ENCODE measurements at regions of chr11 and their contacts with region 1.

Region 1: DNA sequence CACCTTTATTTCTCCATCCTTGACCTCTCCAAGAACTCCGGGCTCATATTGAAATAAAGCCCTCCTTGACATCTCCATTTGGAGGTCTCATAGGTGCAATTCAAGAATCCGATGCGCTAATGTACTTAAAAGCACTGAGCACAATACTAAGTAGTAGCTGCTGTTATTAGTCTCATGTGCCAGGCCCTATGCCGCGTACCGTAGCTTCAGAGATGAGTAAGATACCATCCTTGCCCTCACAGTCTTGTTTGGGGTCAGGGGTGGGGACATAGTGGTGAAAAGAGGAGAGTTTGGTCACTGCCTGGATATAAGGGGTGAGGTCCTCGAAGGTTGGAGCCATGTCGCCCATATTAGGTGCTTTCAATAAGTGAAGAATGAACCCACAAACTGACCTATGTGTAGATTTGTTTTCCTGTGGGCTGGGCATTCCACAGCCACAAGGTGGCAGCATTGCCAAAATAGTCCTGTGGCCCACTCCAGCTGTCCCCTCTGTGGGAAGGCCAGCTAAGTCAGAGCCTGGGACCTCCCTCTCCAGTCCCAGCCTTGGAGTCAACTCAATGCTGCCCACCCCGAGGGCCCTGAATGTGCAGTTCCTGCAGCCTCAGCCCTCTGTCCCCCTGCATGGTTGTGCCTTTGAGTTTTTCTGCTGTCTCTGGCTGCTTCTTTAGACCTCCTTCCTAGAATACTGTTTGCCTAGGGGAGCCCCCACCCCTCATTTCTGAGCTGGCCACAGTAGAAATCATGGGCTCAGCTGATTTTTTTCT is 6.5 kb downstream of the DCPS start:
- DNase-seq: peak; percentile 81 to 86
- H3K4me3 ChIP-seq: no peak overlapping the region
- H3K4me3 Mint-ChIP-seq: no peak overlapping the region
- H3K27ac Mint-ChIP-seq: no peak overlapping the region
- H3K4me1 ChIP-seq: 0 out of 2 replicates have a peak, but pooled peaks cover under 1% of the 10 kb centered on the region
- H3K4me1 Mint-ChIP-seq: no peaks in the 10 kb centered on the region
- H3K27me3 ChIP-seq: no peaks in the 10 kb centered on the region
- H3K27me3 Mint-ChIP-seq: no peaks in the 10 kb centered on the region
- CTCF ChIP-seq: peak; percentile 89 to 99

Region 2: DNA sequence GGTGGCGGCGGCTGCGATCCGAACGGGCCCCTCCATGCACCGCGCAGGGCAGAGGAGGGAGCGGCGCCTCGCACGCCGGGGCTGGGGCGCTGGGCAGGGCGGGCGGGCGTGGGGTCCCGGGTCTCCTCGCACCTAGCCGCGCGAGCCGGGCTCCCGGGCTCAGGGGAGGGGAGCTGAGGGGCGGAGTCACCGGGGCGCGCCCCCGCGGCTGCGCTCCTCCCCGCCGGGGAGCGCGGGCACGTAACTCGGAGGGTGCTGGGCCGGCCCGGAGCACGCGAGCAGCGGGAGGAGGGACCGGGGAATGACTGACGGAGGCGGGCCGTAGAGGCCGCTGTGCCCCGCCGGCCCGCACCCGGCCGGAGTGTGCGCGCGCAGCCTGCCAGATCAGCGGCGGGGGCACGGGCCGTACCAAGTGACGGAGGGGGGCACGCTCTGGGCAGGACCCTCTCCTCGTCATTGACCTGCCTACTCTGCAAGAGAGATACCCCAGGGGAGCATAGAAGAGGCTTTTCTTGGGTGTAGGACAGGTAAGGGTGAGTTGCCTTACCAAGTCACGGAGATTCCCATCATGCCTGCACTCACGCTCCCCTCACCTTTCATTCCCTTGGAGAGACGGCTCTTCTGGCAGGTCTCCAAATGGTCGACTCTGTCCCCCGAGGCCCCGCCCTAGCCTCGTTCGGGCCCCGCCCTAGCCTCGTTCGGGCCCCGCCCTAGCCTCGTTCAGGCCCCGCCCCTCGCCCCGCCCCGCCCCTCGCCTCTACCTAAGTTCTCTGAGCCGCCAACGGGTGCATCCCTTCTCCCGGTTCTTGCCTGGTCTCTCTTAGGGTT is 247.5 kb before region 1 on chr11 and contains the start of gene CDON:
- CTCF ChIA-PET with region 1: no interaction called
- POLR2A ChIA-PET with region 1: no interaction called
- intact Hi-C with region 1: no loop called
- DNase-seq: peak; percentile 95 to 98
- H3K4me3 ChIP-seq: peak within 1 kb of the TSS; percentile 89
- H3K4me3 Mint-ChIP-seq: peak within 1 kb of the TSS; percentile 95
- H3K27ac Mint-ChIP-seq: peak within 1 kb of the TSS; percentile 100
- H3K4me1 ChIP-seq: peaks cover 8% of the 10 kb centered on the region
- H3K4me1 Mint-ChIP-seq: peaks cover 8% of the 10 kb centered on the region
- H3K27me3 ChIP-seq: no peaks in the 10 kb centered on the region
- H3K27me3 Mint-ChIP-seq: peaks cover 16% of the 10 kb centered on the region
- CTCF ChIP-seq: peak in 1 of 2 experiments; percentile 6
- total RNA-seq, gene CDON: 5.7 and 6.8 TPM in 2 replicates

Region 3: DNA sequence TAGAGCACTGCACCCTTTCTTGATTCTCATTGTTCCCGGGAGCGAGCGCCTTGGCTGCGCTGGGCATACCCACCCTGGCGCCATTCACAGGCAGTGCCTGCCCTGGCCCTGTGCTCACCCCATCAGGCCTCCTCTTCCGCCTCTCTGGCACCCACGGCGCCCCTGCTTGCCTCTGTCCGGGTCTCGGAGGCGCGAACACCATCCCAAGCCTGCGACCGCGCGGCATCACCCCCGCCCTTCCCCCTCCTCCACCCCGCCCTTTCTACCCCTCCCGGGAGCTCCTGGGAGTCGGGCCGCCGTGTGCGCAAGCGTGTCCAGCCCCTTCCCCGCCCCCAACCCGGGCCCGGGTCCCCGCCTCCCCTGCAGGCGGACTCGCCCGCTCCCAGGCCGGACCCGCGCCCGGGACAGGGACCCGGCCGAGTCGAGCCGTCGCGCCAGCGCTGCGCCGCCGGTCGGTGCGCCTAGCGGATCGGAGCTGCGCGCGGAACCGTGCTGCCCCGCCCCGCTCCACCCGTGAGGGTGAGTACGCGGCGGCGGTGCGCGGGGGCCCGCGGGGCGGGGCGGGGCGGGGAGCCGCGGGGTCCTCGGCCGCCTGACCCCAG is 45.0 kb after region 1 on chr11 and contains the start of gene ST3GAL4:
- CTCF ChIA-PET with region 1: interaction called, 6 read pairs
- POLR2A ChIA-PET with region 1: interaction called, 4 read pairs
- intact Hi-C with region 1: loop called (anchors 2 kb)
- DNase-seq: peak; percentile 94
- H3K4me3 ChIP-seq: peak within 1 kb of the TSS; percentile 82
- H3K4me3 Mint-ChIP-seq: peak within 1 kb of the TSS; percentile 93
- H3K27ac Mint-ChIP-seq: peak within 1 kb of the TSS; percentile 65
- H3K4me1 ChIP-seq: peaks cover 22% of the 10 kb centered on the region
- H3K4me1 Mint-ChIP-seq: peaks cover 18% of the 10 kb centered on the region
- H3K27me3 ChIP-seq: no peaks in the 10 kb centered on the region
- H3K27me3 Mint-ChIP-seq: no peaks in the 10 kb centered on the region
- CTCF ChIP-seq: no peak
- total RNA-seq, gene ST3GAL4: 11.2 and 11.5 TPM in 2 replicates

Region 4: DNA sequence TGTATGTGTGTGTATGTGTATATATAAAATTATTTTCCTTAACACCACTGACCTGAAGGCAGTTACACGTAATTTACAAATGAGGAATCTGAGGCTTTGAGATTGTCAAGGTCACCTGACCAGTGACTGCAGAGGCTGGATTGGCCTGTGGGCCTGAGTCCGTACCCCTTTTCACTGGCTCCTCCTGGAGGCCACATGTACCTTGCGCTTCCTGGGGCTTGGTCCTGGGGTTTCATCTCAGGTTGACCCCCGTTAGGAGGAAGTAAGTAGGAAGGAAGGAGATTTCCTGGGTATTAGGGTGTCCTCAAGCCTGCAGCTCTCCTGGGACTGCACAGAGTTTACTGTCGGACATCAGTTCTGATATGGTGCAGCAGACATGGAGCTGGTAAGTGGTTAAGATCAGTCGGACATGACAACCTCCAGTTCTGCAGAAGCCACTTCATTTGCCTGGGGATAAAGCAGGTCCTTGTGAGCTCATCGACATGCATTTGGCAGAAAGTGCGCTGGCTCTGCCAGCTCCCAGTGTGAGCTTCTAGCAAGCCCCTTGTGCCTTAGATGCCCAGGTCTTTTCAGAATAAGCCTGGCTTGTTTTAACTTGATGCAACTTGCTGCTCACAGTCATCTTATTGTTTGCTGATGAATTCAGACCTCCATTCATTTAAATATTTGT is 81.7 kb after region 1 on chr11:
- CTCF ChIA-PET with region 1: interaction called, 3 read pairs
- POLR2A ChIA-PET with region 1: no interaction called
- intact Hi-C with region 1: loop called (anchors 1 kb)
- DNase-seq: peak in 1 of 2 experiments; percentile 51
- H3K4me3 ChIP-seq: no peak overlapping the region
- H3K4me3 Mint-ChIP-seq: no peak overlapping the region
- H3K27ac Mint-ChIP-seq: no peak overlapping the region
- H3K4me1 ChIP-seq: no peaks in the 10 kb centered on the region
- H3K4me1 Mint-ChIP-seq: no peaks in the 10 kb centered on the region
- H3K27me3 ChIP-seq: no peaks in the 10 kb centered on the region
- H3K27me3 Mint-ChIP-seq: no peaks in the 10 kb centered on the region
- CTCF ChIP-seq: peak; percentile 31 to 91

Region 5: DNA sequence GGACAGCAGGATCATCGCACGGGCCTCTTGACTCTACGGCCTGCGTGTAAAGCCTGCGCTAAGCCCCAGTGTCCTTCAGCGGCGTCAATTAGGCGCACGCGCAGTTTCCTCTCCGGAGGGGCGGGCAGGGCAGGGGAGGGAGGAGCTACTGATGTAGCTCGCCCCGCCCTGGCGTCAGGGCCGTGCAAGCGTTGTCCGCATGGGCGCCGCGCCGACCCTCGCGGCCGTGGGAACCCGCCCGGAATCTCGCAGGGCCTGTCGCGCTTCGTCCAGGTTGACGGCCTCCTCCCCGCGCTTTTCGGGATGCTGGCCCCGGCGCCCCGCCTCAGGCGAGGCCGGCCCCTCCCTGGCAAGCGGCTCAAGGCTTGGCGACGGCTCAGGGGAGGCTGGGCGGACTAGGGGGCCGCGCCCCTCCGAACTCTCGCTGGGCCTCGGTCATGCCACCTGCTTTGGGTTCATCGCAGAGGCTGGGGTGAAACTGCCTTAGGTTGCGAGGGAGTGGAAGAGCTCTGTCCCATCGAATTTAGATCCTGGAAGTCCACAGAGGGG is 106.2 kb after region 1 on chr11:
- CTCF ChIA-PET with region 1: interaction called, 4 read pairs
- POLR2A ChIA-PET with region 1: no interaction called
- intact Hi-C with region 1: loop called (anchors 5 kb)
- DNase-seq: peak; percentile 80 to 90
- H3K4me3 ChIP-seq: peak overlapping the region; percentile 48
- H3K4me3 Mint-ChIP-seq: peak overlapping the region; percentile 60
- H3K27ac Mint-ChIP-seq: peak overlapping the region; percentile 34
- H3K4me1 ChIP-seq: peaks cover 5% of the 10 kb centered on the region; the same call in 1 of the 2 replicates
- H3K4me1 Mint-ChIP-seq: no peaks in the 10 kb centered on the region
- H3K27me3 ChIP-seq: no peaks in the 10 kb centered on the region
- H3K27me3 Mint-ChIP-seq: no peaks in the 10 kb centered on the region
- CTCF ChIP-seq: no peak

Region 6: DNA sequence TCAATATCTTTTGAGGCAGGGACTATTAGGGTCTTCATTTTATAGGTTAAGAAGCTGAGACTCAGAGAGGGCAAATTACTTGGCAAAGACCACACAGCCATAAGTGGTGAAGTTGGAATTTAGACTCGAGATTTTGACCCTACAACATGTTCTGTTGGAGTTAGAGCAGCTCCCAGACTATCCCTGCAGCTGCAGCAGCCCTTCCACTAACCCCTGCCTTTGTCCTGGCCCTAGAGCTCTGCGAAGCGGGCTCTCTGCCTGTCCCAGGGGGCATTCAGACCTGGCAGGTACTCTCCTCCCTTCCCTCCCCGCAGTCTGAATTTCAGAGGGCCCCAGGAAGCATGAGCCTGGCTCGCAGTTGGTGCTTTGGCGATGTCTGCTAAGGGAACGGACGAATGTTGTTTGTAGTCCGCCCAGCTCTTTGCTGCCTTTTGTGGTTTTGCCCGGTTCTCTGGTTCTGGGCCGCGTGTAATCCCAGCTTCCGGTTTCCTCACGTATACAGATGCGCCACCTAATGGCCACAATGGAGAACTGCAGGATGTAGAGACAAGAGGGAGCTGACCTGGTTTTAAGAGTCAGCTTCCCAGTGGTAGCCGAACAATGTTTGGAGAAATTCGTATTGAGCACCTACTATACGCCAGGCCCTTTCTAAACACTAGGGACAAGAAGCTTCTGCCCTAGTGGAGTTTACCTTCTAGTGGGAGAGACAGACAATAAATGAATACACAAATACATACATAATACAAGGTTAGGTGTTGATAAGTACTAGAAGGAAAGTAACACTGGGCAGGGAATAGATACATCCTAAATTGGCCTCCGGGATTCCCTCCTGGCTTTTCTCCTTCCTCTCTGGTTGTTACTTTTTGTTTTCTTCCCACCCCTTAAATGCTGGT is 170.2 kb after region 1 on chr11:
- CTCF ChIA-PET with region 1: interaction called, 68 read pairs
- POLR2A ChIA-PET with region 1: no interaction called
- intact Hi-C with region 1: loop called (anchors 1 kb)
- DNase-seq: peak; percentile 83 to 86
- H3K4me3 ChIP-seq: no peak overlapping the region
- H3K4me3 Mint-ChIP-seq: peak overlapping the region; percentile 56
- H3K27ac Mint-ChIP-seq: peak overlapping the region; percentile 61
- H3K4me1 ChIP-seq: peaks cover 6% of the 10 kb centered on the region
- H3K4me1 Mint-ChIP-seq: peaks cover 6% of the 10 kb centered on the region
- H3K27me3 ChIP-seq: peaks cover 4% of the 10 kb centered on the region
- H3K27me3 Mint-ChIP-seq: peaks cover 30% of the 10 kb centered on the region
- CTCF ChIP-seq: peak; percentile 92 to 98